ENCODE measurements at regions of chr10 and their contacts with region 1.

Region 1: DNA sequence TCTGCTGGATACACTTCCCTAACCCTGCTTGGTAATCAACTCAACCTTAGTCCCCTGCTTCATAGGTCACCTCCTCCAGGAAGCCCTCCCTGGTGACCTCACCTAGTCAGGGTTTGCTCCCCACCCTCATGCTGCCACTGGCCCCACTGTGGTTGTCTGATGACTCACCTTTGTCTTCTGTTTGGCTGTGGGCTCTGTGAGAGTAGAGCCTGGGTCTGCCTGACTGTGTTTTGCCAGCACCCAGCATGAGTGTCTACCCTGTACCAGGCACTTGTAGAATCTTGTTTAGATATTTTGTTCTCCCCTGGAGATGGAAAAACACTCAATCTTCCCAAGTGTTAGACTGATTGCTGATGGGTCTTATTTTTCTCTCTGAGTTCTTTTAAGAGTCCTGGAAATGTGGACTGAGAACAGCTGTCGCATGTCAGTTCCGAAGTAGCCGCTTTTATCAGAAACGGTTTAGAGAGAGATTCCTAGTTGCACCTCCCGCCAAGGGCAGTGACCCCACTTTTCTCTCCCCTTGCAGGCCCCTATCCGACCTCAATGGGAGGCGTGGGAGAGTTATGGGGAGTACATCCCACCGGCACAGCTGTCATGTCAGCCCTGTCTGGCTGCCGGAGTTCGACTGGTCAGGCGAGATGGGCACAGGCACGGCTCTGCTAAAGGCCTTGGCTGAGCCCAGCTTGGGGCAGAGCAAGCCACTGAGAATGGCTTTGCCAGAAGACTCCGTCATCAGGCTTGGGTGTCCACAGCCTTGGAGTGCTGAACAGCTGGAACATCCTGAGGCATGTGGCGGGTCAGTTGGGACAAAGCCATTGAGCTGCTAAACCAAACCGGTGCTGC is 134.3 kb downstream of the GRK5 start:
- DNase-seq: peak; percentile 44
- H3K4me3 ChIP-seq: no peak overlapping the region
- H3K27ac ChIP-seq: no peak overlapping the region
- H3K4me1 ChIP-seq: peaks cover 21% of the 10 kb centered on the region
- H3K27me3 ChIP-seq: no peaks in the 10 kb centered on the region
- CTCF ChIP-seq: no peak
- POLR2A ChIP-seq: no peak

Region 2: GRCh38 chr10:119315128-119316001 is 26.3 kb before region 1 on chr10:
- CTCF ChIA-PET with region 1: no interaction called
- POLR2A ChIA-PET with region 1: no interaction called
- dilution Hi-C with region 1: no loop called
- intact Hi-C with region 1: loop called (anchors 2 kb)
- DNase-seq: peak; percentile 57
- H3K4me3 ChIP-seq: no peak overlapping the region
- H3K27ac ChIP-seq: peak overlapping the region; percentile 94
- H3K4me1 ChIP-seq: peaks cover 35% of the 10 kb centered on the region
- H3K27me3 ChIP-seq: no peaks in the 10 kb centered on the region
- CTCF ChIP-seq: no peak
- POLR2A ChIP-seq: no peak

Region 3: GRCh38 chr10:119409866-119410299 is 68.2 kb after region 1 on chr10:
- CTCF ChIA-PET with region 1: interaction called, 3 read pairs
- POLR2A ChIA-PET with region 1: no interaction called
- dilution Hi-C with region 1: no loop called
- intact Hi-C with region 1: loop called (anchors 2 kb)
- DNase-seq: peak; percentile 94
- H3K4me3 ChIP-seq: no peak overlapping the region
- H3K27ac ChIP-seq: peak overlapping the region; percentile 85
- H3K4me1 ChIP-seq: peaks cover 44% of the 10 kb centered on the region
- H3K27me3 ChIP-seq: no peaks in the 10 kb centered on the region
- CTCF ChIP-seq: no peak
- POLR2A ChIP-seq: peak; percentile 66